ENCODE measurements at regions of chr19 and their contacts with region 1.

Region 1: DNA sequence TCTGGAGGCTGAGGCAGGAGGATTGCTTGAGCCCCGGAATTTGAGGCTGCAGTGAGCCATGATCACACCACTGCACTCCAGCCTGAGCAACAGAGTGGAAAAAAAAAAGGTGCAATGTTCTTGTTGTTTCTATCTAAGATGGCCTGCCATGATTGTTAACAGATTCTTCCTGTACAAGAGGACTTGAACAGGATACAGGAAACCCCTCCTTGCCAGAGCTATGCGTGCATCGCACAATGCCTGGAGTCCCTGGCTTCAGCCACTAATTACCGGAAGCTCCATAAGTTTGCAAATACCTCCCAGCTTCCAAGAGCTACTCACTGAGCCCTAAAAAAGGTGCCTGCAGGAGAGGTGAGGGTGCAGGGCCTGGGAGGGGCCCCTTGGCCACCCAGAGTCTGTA is 13.1 kb upstream of the HIF3A start:
- DNase-seq: no peak
- ATAC-seq: no peak
- H3K4me3 Mint-ChIP-seq: no peak overlapping the region
- H3K27ac Mint-ChIP-seq: no peak overlapping the region
- H3K4me1 Mint-ChIP-seq: peaks cover 7% of the 10 kb centered on the region
- H3K27me3 Mint-ChIP-seq: no peaks in the 10 kb centered on the region
- CTCF ChIP-seq: no peak

Region 2: DNA sequence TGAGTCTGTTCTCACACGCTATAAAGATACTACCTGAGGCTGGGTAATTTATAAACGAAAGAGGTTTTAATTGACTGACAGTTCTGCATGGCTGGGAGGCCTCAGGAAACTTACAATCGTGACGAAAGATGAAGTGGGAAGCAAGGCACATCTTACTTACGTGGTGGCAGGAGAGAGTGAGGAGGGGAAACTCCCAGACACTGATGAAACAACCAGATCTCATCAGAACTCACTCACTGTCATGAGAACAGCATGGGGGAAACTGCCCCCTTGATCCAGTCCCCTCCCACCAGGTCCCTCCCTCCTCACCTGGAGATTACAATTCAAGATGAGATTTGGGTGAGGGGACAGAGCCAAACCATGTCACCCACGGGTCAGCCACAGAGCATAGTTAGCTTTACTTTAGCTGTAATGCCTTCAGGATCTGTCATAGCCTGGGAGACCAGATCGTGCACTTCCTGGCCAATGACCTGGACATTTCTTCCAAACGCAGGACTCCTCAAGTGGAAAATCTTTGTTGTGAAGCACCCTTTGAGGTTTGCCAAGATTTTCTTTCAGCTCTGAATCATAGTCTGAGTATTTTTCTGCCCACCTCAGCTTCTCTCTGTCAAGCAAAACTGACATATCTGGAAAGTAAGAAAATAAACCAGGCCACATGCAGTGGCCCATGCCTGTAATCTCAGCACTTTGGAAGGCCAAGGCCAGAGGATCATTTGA is 12.1 kb before region 1 on chr19:
- CTCF ChIA-PET with region 1: interaction called, 13 read pairs
- POLR2A ChIA-PET with region 1: no interaction called
- DNase-seq: no peak
- ATAC-seq: no peak
- H3K4me3 Mint-ChIP-seq: no peak overlapping the region
- H3K27ac Mint-ChIP-seq: peak overlapping the region; percentile 75
- H3K4me1 Mint-ChIP-seq: peaks cover 32% of the 10 kb centered on the region
- H3K27me3 Mint-ChIP-seq: no peaks in the 10 kb centered on the region; the same call in 1 of the 2 replicates
- CTCF ChIP-seq: no peak

Region 3: GRCh38 chr19:46299004-46299509 is 15.3 kb after region 1 on chr19:
- CTCF ChIA-PET with region 1: interaction called, 95 read pairs
- POLR2A ChIA-PET with region 1: interaction called, 5 read pairs
- DNase-seq: no peak
- ATAC-seq: no peak
- H3K4me3 Mint-ChIP-seq: 0 out of 2 replicates have a peak overlapping the region, but pooled peaks have one; percentile 12
- H3K27ac Mint-ChIP-seq: no peak overlapping the region
- H3K4me1 Mint-ChIP-seq: peaks cover 38% of the 10 kb centered on the region
- H3K27me3 Mint-ChIP-seq: peaks cover 18% of the 10 kb centered on the region
- CTCF ChIP-seq: no peak

Region 4: GRCh38 chr19:46373421-46374359 is 89.9 kb after region 1 on chr19:
- CTCF ChIA-PET with region 1: interaction called, 16 read pairs
- POLR2A ChIA-PET with region 1: no interaction called
- DNase-seq: peak; percentile 61
- ATAC-seq: peak; percentile 86
- H3K4me3 Mint-ChIP-seq: peak overlapping the region; percentile 40
- H3K27ac Mint-ChIP-seq: peak overlapping the region; percentile 97
- H3K4me1 Mint-ChIP-seq: peaks cover 39% of the 10 kb centered on the region
- H3K27me3 Mint-ChIP-seq: no peaks in the 10 kb centered on the region
- CTCF ChIP-seq: no peak

Region 5: DNA sequence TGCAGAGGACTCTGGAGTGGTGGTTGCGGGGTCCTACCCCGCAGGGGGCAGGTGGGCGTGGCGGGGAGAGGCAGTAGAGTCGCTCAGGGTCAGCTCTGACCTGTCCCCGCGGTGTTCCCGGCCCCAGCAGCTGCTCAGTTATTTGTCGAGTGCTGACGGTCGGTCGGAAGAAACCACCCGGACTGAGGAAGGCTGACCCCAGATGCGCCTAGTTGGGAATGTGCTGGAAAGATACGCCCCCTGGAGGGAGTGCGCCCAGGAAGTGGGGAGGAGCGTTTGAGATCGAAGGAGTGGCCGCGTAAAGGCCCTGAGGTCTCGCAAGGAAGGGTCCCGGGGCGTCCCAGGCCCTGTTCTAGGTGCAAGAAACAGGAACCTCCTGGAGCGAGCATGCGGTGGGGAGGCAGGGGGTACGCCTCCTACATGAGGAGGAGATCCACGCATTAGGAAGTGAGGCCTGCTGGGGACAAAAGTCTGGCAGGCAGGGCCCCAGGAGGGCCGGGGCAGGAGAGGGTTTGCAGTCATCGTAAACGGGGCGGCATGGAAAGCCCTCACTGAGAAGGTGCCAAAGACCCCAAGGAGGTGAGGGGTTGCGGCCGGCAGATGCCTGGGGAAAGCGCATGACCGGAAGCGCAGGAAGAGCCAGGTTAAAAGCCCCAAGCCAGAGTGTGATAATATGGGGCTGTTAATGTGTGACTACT is 120.4 kb after region 1 on chr19:
- CTCF ChIA-PET with region 1: interaction called, 11 read pairs
- POLR2A ChIA-PET with region 1: no interaction called
- DNase-seq: no peak
- ATAC-seq: peak; percentile 20
- H3K4me3 Mint-ChIP-seq: peak overlapping the region; percentile 77
- H3K27ac Mint-ChIP-seq: peak overlapping the region; percentile 1
- H3K4me1 Mint-ChIP-seq: peaks cover 57% of the 10 kb centered on the region
- H3K27me3 Mint-ChIP-seq: peaks cover 40% of the 10 kb centered on the region
- CTCF ChIP-seq: no peak; the same call in 1 of the 2 replicates

Region 6: DNA sequence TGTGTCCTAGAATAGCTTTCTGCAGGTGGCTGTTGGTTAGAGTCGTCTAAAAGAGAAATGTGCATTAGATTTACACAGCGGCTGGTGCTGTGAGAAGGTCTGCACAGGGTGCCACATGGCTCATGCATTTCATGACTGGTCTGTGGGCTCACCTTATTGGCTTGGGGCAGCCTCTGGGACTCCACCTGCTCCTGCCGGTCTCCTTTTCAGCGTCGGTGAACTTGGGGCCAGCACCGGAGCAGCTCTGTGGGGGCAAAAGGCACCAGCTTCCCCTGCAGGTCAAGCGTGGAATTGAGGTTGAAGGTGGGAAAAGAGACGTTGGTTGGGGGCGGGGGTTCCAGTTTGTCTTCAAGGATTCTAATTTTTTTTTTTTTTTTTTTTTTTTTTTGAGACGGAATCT is 148.1 kb after region 1 on chr19:
- CTCF ChIA-PET with region 1: interaction called, 11 read pairs
- POLR2A ChIA-PET with region 1: no interaction called
- DNase-seq: peak; percentile 75
- ATAC-seq: peak; percentile 76
- H3K4me3 Mint-ChIP-seq: no peak overlapping the region
- H3K27ac Mint-ChIP-seq: no peak overlapping the region
- H3K4me1 Mint-ChIP-seq: peaks cover 22% of the 10 kb centered on the region
- H3K27me3 Mint-ChIP-seq: peaks cover 29% of the 10 kb centered on the region
- CTCF ChIP-seq: peak; percentile 40

Measured in WTC11 (cell line).